ENCODE measurements at regions of chr15 and their contacts with region 1.

Region 1: GRCh38 chr15:101167753-101168463 is 83.9 kb downstream of the CHSY1 start:
- DNase-seq: peak; percentile 95

Region 2: GRCh38 chr15:100873029-100873677 is 294.8 kb before region 1 on chr15:
- intact Hi-C with region 1: no loop called
- DNase-seq: no peak

Region 3: DNA sequence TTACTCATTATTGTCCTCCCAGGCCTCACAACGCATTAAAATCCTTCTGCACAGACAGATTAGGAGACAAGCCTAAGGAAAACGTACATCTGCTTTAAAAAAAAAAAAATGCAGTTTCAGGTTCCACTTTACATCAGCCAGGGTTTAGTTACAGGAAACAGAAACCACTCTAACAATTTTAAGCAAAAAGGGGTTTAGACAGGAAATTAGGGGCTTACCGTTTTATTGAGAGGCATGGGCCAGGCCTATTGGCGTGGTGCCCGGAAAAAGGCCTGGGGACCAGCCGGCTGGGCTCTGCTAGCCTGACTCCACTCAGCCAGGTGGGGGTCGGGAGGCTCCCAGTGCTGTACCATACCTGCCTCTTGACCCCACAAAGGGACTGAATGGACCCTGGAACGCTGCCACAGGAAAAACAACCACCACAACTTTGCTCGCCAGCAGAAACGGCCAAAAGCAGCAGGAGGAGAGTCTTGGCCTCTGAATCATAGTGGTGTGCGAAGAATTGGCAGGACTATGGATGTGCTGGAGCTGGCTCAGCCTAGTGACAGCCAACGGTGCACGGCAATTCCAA is 40.3 kb before region 1 on chr15:
- intact Hi-C with region 1: loop called in 1 of 2 experiments (anchors 5 kb)
- DNase-seq: peak; percentile 92

Region 4: GRCh38 chr15:101242160-101242998 is 74.5 kb after region 1 on chr15:
- intact Hi-C with region 1: loop called in 1 of 2 experiments (anchors 10 kb)
- DNase-seq: no peak